A673 (cell line): ENCODE measurements at regions of chr11 and their contacts with region 1.

Region 1: DNA sequence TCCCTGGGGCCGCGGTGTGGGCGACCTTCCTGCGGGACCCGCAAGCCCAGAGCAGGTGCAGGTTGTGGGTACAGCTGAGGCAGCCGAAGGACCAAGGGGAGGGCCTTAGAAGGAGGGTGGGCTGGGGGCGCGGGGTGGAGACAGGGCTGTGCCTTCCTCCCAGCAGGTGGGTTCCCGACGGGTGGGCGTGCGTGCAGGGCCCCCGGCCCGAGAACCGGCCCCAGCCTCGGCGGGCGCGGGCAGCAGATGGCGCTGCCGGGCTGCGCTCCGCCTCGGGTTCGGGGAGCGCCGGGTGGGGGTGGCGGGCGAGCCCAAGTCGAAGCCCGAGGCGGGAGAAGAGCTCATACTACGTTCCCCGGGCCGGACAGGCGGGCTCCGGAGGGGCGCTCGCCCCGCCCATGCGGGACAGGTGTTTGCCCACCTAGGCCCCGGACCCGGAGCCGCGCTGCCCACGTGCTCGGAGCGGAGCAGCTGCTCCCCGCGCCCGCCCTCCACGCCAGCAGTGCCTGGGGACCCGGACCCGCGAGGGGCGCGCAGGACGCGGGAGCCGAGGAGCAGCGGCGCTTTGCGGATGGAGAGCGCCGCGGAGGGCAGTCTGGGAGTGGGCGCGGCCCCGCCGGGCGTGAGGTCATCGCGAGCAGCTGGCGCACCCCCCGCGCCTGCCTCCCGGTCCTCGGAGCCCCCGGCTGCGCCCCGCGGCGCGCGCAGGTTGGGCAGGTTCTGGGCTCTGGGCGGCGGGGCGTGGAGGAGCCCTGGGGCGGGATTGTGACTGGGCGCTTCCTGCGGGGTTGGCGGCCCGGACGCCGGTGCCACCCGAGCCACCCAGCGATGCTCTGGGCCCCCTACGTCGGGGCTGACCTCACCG is 25.3 kb downstream of the DUSP8 start:
- DNase-seq: peak; percentile 55
- H3K4me3 ChIP-seq: peak overlapping the region; percentile 21
- H3K27ac ChIP-seq: no peak overlapping the region
- H3K4me1 ChIP-seq: no peaks in the 10 kb centered on the region
- H3K27me3 ChIP-seq: peaks cover 35% of the 10 kb centered on the region
- CTCF ChIP-seq: peak; percentile 58

Region 2: GRCh38 chr11:975827-976226 is 570.9 kb before region 1 on chr11:
- CTCF ChIA-PET with region 1: no interaction called
- POLR2A ChIA-PET with region 1: no interaction called
- intact Hi-C with region 1: no loop called
- DNase-seq: peak; percentile 62
- H3K4me3 ChIP-seq: no peak overlapping the region
- H3K27ac ChIP-seq: no peak overlapping the region
- H3K4me1 ChIP-seq: no peaks in the 10 kb centered on the region
- H3K27me3 ChIP-seq: no peaks in the 10 kb centered on the region
- CTCF ChIP-seq: peak; percentile 56

Region 3: GRCh38 chr11:1572197-1573076 is 25.7 kb after region 1 on chr11 and contains the start of gene DUSP8:
- CTCF ChIA-PET with region 1: interaction called, 17 read pairs
- POLR2A ChIA-PET with region 1: no interaction called
- intact Hi-C with region 1: loop called (anchors 2 kb)
- DNase-seq: peak; percentile 81
- H3K4me3 ChIP-seq: peak within 1 kb of the TSS; percentile 38
- H3K27ac ChIP-seq: no peak within 1 kb of the TSS
- H3K4me1 ChIP-seq: peaks cover 6% of the 10 kb centered on the region
- H3K27me3 ChIP-seq: peaks cover 25% of the 10 kb centered on the region
- CTCF ChIP-seq: no peak
- total RNA-seq, gene DUSP8: 0.70 and 1.9 TPM in 2 replicates

Region 4: GRCh38 chr11:1628506-1629325 is 81.9 kb after region 1 on chr11:
- CTCF ChIA-PET with region 1: interaction called, 4 read pairs
- POLR2A ChIA-PET with region 1: no interaction called
- intact Hi-C with region 1: loop called (anchors 10 kb)
- DNase-seq: peak; percentile 44
- H3K4me3 ChIP-seq: no peak overlapping the region
- H3K27ac ChIP-seq: no peak overlapping the region
- H3K4me1 ChIP-seq: no peaks in the 10 kb centered on the region
- H3K27me3 ChIP-seq: no peaks in the 10 kb centered on the region
- CTCF ChIP-seq: peak; percentile 92

Region 5: GRCh38 chr11:1682225-1682905 is 135.6 kb after region 1 on chr11:
- CTCF ChIA-PET with region 1: no interaction called
- POLR2A ChIA-PET with region 1: no interaction called
- intact Hi-C with region 1: no loop called
- DNase-seq: no peak
- H3K4me3 ChIP-seq: no peak overlapping the region
- H3K27ac ChIP-seq: no peak overlapping the region
- H3K4me1 ChIP-seq: no peaks in the 10 kb centered on the region
- H3K27me3 ChIP-seq: no peaks in the 10 kb centered on the region
- CTCF ChIP-seq: no peak

Region 6: DNA sequence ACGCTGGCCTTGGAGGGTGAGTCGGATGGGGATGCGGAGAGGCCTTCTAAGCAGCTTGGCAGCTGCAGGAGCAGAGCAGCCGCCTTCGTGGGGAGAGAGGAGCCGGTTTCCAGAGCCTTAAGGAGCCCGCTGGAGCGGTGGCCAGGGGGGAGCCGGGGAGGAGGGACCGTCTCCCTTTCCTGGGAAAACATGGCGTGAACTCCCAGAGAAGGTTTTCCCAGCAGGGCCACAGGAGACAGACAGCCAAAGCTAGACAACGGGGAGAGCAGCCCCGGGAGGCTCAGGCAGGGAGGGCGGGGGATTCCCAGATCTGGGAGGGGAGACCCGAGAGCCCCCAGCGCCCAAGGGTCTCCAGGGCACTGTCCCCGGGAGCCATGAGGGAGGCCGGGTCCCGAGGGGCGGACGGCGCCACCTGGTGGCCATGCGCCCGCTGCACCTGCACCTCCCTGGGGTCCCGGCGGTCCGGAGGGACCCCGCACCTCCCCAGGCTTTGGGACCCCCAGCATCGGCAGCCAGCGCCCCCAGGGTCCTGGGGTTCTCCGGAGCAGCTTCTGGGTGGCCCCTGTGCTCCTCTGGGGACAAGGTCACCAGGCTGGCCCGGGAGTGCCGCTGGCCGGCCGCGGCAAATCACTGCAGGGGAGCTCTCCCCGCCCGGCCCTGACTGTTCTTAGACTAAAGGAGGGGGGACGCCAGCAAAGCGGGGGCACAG is 285.6 kb after region 1 on chr11:
- CTCF ChIA-PET with region 1: no interaction called
- POLR2A ChIA-PET with region 1: no interaction called
- intact Hi-C with region 1: loop called (anchors 5 kb)
- DNase-seq: peak; percentile 40
- H3K4me3 ChIP-seq: no peak overlapping the region
- H3K27ac ChIP-seq: no peak overlapping the region
- H3K4me1 ChIP-seq: no peaks in the 10 kb centered on the region
- H3K27me3 ChIP-seq: peaks cover 20% of the 10 kb centered on the region
- CTCF ChIP-seq: peak; percentile 89